ENCODE measurements at regions of chr1 and their contacts with region 1.

Region 1: DNA sequence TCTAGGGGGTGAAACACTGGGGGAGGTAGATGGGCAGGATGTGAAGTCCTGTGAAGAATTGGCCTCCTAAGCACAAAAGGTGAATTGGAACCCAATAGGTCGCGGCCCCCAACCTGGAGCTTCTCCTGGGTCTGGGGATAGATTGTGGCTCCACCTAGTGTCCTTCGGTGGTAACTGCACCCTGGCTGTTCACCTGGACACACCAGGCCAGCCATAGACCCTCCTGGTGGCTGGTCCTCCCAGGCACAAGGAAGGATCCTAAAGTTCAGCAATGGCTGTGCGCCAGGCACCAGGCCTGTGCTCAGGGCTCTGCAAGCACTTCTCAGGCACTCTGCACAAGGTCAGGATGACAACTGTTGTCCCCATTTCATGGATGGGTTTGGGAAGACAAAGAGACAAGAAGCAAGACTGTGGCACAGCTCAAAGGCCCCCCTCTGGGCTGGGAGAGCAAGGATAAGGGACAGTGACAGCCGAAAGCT is 13.5 kb downstream of the ESPN start:
- DNase-seq: peak in 1 of 2 donors; percentile 54
- H3K4me3 ChIP-seq: no peak overlapping the region
- H3K27ac ChIP-seq: no peak overlapping the region
- H3K4me1 ChIP-seq: no peaks in the 10 kb centered on the region
- H3K27me3 ChIP-seq: peaks cover 0 to 6% of the 10 kb centered on the region in 2 donors
- CTCF ChIP-seq: peak; percentile 85 to 90 (median 86)
- POLR2A ChIP-seq: no peak

Region 2: GRCh38 chr1:5151511-5151910 is 1286.6 kb before region 1 on chr1:
- intact Hi-C with region 1: no loop called
- DNase-seq: no peak
- H3K4me3 ChIP-seq: no peak overlapping the region
- H3K27ac ChIP-seq: no peak overlapping the region
- H3K4me1 ChIP-seq: no peaks in the 10 kb centered on the region
- H3K27me3 ChIP-seq: peaks cover 0 to 20% of the 10 kb centered on the region in 2 donors
- CTCF ChIP-seq: no peak
- POLR2A ChIP-seq: no peak

Region 3: DNA sequence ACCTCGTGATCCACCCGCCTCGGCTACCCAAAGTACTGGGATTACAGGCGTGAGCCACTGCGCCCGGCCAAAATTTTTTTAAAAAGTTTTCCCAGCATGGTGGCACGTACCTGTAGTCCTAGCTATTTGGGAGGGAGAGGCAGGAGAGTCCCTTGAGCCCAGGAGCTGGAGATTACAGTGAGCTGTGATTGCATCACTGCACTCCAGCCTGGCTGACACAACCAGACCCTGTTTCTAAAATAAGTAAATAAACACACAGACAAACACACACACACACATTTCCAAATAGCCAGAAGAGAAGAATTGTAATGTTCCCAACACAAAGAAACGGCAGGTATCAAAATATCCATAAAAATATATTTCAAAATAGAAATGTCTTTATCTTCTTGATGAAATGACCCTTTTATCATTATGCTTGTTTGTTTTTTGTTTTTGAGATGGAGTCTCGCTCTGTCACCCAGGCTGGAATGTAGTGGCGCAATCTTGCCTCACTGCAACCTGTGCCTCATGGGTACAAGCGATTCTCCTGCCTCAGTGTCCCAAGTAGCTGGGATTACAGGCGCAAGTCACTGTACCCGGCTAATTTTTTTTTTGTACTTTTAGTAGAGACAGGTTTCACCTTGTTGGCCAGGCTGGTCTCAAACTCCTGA is 27.7 kb before region 1 on chr1:
- intact Hi-C with region 1: loop called (anchors 2 kb)
- DNase-seq: no peak
- H3K4me3 ChIP-seq: no peak overlapping the region
- H3K27ac ChIP-seq: no peak overlapping the region
- H3K4me1 ChIP-seq: no peaks in the 10 kb centered on the region
- H3K27me3 ChIP-seq: peaks cover 0 to 8% of the 10 kb centered on the region in 2 donors
- CTCF ChIP-seq: no peak
- POLR2A ChIP-seq: no peak